CD8-positive, alpha-beta T cell (primary cell): ENCODE measurements at regions of chr21 and their contacts with region 1.

Region 1: GRCh38 chr21:35579520-35580293 is 480.6 kb downstream of the SETD4 start:
- DNase-seq: no peak
- ATAC-seq: no peak
- H3K4me3 ChIP-seq: no peak overlapping the region
- H3K4me3 Mint-ChIP-seq: no peak overlapping the region
- H3K27ac ChIP-seq: no peak overlapping the region
- H3K27ac Mint-ChIP-seq: no peak overlapping the region
- H3K4me1 ChIP-seq: no peaks in the 10 kb centered on the region
- H3K4me1 Mint-ChIP-seq: no peaks in the 10 kb centered on the region
- H3K27me3 ChIP-seq: no peaks in the 10 kb centered on the region
- H3K27me3 Mint-ChIP-seq: peaks cover 8% of the 10 kb centered on the region
- CTCF ChIP-seq: no peak

Region 2: DNA sequence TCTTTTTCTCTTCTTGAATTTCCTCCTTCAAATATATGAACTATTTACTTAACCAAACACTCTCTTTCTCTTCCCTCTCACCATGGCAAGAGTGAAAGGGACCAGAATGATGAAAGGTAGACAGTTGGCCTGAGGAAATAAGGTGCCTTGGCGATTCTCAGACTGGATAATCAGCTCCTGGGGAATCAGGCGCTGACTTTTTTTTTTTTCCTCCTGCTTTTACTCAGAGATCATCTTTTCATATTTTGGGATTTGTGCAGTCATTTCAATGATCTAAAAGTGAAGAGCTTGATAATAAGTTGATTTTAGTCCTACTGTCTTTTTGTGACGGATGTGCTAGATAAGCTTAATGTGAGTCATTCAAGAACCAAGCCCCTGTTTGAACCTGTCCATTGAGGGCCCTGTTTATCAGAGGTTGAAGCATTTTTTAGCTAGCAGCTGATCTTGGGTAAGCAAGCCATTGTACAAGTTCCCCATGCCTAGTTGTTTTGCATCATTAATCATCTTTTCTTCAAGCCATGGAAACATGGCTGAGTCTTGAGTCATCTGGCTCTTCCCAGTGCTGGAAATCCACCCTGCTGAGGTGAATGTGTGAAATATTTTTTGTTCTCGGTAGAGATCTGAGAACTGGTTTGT is 1896.6 kb before region 1 on chr21:
- CTCF ChIA-PET with region 1: no interaction called
- POLR2A ChIA-PET with region 1: no interaction called
- intact Hi-C with region 1: loop called in 1 of 2 experiments (anchors 5 kb)
- DNase-seq: no peak
- ATAC-seq: no peak
- H3K4me3 ChIP-seq: no peak overlapping the region
- H3K4me3 Mint-ChIP-seq: no peak overlapping the region
- H3K27ac ChIP-seq: no peak overlapping the region
- H3K27ac Mint-ChIP-seq: no peak overlapping the region
- H3K4me1 ChIP-seq: no peaks in the 10 kb centered on the region
- H3K4me1 Mint-ChIP-seq: no peaks in the 10 kb centered on the region
- H3K27me3 ChIP-seq: no peaks in the 10 kb centered on the region
- H3K27me3 Mint-ChIP-seq: peaks cover 6% of the 10 kb centered on the region
- CTCF ChIP-seq: no peak